HEK293T (cell line): ENCODE measurements at regions of chr6 and their contacts with region 1.

Region 1: GRCh38 chr6:136249811-136250685 is at the start of gene MTFR2:
- DNase-seq: peak; percentile 98

Region 2: GRCh38 chr6:136230219-136230853 is 19.7 kb before region 1 on chr6:
- CTCF ChIA-PET with region 1: interaction called, 4 read pairs
- POLR2A ChIA-PET with region 1: interaction called, 10 read pairs
- DNase-seq: no peak

Region 3: DNA sequence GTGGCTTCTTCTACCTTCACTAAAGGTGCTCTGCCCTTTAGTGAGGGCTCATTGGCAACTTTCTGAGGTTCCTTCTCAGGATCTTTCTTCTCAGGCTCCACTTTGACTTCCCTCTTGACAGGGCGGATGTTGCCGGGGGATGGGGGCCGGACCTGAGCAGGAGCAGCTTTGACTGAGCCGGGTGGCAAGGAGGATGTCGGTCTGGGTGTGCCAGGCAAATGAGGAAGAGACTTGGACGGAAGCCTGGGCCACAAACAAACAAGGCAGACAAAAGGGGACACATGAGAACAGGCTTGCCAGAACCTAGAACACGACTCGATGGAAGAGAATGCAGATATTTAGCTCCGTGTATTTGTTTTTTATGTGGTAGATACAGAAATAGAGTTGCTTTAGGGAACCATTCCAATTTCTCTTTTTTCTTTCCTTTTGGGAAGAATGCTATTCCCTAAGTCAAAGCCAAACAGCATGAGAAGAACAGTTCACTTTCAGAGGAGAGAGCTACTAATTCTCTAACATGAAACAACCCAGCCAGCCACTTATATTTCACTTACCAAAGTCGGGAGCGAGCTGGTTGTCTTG is 115.8 kb after region 1 on chr6:
- CTCF ChIA-PET with region 1: no interaction called
- POLR2A ChIA-PET with region 1: no interaction called
- DNase-seq: no peak